OCI-LY7 (cell line): ENCODE measurements at regions of chr1 and their contacts with region 1.

Region 1: DNA sequence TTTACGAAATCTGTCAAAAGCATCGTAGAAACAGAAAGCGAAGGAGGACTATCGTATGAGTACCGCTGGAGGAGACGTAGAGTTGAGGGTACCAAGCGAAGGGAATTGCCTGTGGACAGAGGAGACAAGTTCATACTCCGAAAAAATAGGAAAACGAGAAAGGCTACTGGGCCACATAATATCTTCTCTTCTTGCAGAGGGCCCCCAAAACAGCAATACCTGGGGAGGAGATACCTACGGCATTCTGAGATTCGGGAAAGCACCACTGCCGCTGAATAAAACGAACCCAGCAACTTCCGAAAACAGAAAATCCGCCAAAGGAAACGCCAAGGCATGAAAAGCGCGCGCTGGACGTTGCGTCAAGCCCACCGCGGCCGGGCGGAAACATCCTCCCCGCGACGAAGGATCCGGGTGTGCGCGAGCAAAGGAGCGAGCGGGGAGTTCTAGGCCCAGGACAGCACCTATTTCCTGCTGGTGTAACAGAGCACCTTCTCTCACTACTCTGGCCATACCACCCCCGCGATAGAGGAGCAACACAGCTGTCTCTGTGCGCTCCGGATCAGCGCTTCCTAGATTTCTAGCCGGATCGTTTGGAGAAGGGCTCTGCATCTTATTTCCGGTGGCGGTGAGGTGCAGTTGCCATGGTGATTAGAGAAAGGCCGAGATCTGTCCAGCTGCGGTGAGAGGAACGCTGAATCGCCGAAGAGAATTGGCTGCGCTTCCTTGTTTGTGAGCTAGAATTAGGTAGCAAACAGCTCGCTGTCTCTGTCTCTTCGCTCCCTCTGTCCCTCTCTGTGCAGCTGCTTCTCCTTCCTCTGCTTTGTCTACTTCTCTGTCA is at the starts of genes EFCAB7 and ITGB3BP:
- DNase-seq: peak; percentile 96
- H3K4me3 ChIP-seq: peak within 1 kb of the TSS; percentile 95
- H3K27ac ChIP-seq: peak within 1 kb of the TSS; percentile 82
- H3K4me1 ChIP-seq: peaks cover 31% of the 10 kb centered on the region
- CTCF ChIP-seq: no peak
- total RNA-seq, gene EFCAB7: 7.1 and 10.5 TPM in 2 replicates
- total RNA-seq, gene ITGB3BP: 91.5 and 97.5 TPM in 2 replicates

Region 2: GRCh38 chr1:61724813-61725694 is 1798.1 kb before region 1 on chr1 and contains the start of gene TM2D1:
- CTCF ChIA-PET with region 1: no interaction called
- POLR2A ChIA-PET with region 1: no interaction called
- intact Hi-C with region 1: loop called (anchors 10 kb)
- DNase-seq: peak; percentile 91
- H3K4me3 ChIP-seq: peak within 1 kb of the TSS; percentile 87
- H3K27ac ChIP-seq: peak within 1 kb of the TSS; percentile 52
- H3K4me1 ChIP-seq: peaks cover 24% of the 10 kb centered on the region
- CTCF ChIP-seq: no peak
- total RNA-seq, gene TM2D1: 40.8 and 44.9 TPM in 2 replicates

Region 3: GRCh38 chr1:63316984-63317816 is 205.9 kb before region 1 on chr1:
- CTCF ChIA-PET with region 1: no interaction called
- POLR2A ChIA-PET with region 1: no interaction called
- intact Hi-C with region 1: loop called (anchors 1 kb)
- DNase-seq: peak; percentile 86
- H3K4me3 ChIP-seq: peak overlapping the region; percentile 70
- H3K27ac ChIP-seq: no peak overlapping the region
- H3K4me1 ChIP-seq: peaks cover 14% of the 10 kb centered on the region
- CTCF ChIP-seq: peak; percentile 79

Region 4: GRCh38 chr1:63414691-63415365 is 108.3 kb before region 1 on chr1:
- CTCF ChIA-PET with region 1: no interaction called
- POLR2A ChIA-PET with region 1: no interaction called
- intact Hi-C with region 1: no loop called
- DNase-seq: no peak
- H3K4me3 ChIP-seq: no peak overlapping the region
- H3K27ac ChIP-seq: no peak overlapping the region
- H3K4me1 ChIP-seq: no peaks in the 10 kb centered on the region
- CTCF ChIP-seq: no peak

Region 5: DNA sequence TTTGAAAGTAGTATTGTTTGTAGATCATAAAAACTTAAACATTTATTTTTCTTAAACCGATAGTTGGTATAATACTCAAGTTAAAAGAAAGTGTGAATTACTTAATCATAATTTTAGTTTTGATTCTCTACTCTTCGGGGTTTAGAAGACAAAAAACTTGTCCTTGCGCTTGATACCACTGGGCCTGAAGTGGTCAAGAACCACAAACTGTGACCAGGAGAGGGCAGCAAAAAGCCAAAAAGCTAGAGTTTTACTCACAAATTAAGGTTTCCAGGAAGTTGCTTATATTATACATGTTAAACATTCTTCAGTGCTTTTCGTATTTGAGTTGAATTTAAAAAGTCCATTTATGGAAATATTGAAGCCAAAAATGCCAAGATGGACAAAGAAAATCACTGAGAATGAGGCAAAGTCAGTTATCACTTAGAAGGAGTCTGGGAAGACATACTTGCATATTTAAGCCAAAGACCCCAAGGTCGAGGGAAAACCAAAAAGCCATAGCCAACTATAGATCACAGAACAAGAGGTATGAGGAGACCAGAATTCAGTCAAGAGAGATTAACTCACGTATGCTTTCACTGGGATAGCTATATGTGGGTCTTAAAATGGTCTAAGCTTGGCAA is 34.4 kb after region 1 on chr1:
- CTCF ChIA-PET with region 1: no interaction called
- POLR2A ChIA-PET with region 1: interaction called, 12 read pairs
- intact Hi-C with region 1: no loop called
- DNase-seq: peak; percentile 54
- H3K4me3 ChIP-seq: no peak overlapping the region
- H3K27ac ChIP-seq: no peak overlapping the region
- H3K4me1 ChIP-seq: no peaks in the 10 kb centered on the region
- CTCF ChIP-seq: peak; percentile 86

Region 6: GRCh38 chr1:63593303-63593885 is 70.3 kb after region 1 on chr1 and contains the start of gene PGM1:
- CTCF ChIA-PET with region 1: no interaction called
- POLR2A ChIA-PET with region 1: interaction called, 4 read pairs
- intact Hi-C with region 1: loop called (anchors 2 kb)
- DNase-seq: peak; percentile 85
- H3K4me3 ChIP-seq: peak within 1 kb of the TSS; percentile 94
- H3K27ac ChIP-seq: peak within 1 kb of the TSS; percentile 76
- H3K4me1 ChIP-seq: peaks cover 11% of the 10 kb centered on the region
- CTCF ChIP-seq: no peak
- total RNA-seq, gene PGM1: 39.2 and 43.2 TPM in 2 replicates

Region 7: GRCh38 chr1:63821091-63822005 is 298.2 kb after region 1 on chr1:
- CTCF ChIA-PET with region 1: no interaction called
- POLR2A ChIA-PET with region 1: no interaction called
- intact Hi-C with region 1: loop called (anchors 10 kb)
- DNase-seq: no peak
- H3K4me3 ChIP-seq: no peak overlapping the region
- H3K27ac ChIP-seq: no peak overlapping the region
- H3K4me1 ChIP-seq: no peaks in the 10 kb centered on the region
- CTCF ChIP-seq: no peak